GM10248 (cell line): ENCODE measurements at regions of chr11 and their contacts with region 1.

Region 1: GRCh38 chr11:131867457-131868257 is 497.2 kb downstream of the NTM start:
- DNase-seq: peak; percentile 76
- CTCF ChIP-seq: peak; percentile 74

Region 2: DNA sequence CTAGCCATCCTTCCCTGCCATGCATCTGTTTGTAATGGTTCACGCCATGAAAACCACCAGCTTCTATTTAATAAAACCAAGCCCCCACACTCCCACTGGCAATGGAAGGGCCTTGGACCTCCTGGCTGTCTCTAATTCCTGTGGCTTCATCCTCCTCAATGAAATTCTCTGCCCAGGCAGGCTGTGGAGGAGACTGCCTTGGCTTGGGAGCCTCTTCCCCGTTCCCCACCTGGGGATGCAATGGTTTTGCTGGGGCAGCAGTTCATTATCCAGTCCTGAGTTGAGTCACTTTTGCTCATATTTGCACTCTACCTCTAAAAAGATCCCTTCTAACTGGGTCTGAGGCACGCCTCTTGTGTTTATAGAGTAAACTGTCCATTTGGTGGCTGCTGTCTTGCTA is 18.5 kb after region 1 on chr11:
- CTCF ChIA-PET with region 1: interaction called, 22 read pairs
- POLR2A ChIA-PET with region 1: no interaction called
- DNase-seq: no peak
- CTCF ChIP-seq: no peak

Region 3: GRCh38 chr11:131893103-131893890 is 25.6 kb after region 1 on chr11:
- CTCF ChIA-PET with region 1: interaction called, 22 read pairs
- POLR2A ChIA-PET with region 1: no interaction called
- DNase-seq: peak; percentile 70
- CTCF ChIP-seq: no peak

Region 4: DNA sequence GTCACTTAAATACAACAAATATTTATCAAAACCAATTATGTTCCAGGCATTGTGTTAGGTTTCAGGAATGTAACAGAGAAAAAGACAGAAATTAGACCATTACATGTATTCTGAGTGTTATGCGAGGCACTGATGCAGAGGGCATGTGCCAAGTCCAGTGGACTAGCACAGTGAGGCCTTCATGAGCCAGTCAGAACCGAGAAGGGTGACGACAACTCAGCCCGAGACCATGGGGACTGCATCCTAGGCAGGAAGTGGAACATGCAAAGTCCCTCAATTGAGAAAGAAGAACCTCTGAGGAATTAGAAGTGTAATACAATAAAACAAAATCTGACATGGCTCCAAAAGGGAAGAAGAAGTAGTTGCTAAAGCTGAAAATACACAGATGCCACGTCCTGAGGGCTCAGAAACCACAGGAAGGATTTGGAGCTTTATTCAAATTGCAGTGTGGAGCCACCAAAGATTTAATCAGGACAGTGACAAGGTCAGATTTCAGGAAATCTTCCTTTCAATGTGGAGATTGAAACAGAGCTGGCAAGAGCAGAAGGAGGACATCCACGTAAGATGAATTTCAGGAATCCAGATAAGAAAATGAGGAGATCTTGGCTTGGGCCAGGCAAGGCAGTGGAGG is 32.4 kb after region 1 on chr11:
- CTCF ChIA-PET with region 1: interaction called, 22 read pairs
- POLR2A ChIA-PET with region 1: no interaction called
- DNase-seq: no peak
- CTCF ChIP-seq: no peak

Region 5: GRCh38 chr11:131910523-131911387 is 43.1 kb after region 1 on chr11:
- CTCF ChIA-PET with region 1: interaction called, 103 read pairs
- POLR2A ChIA-PET with region 1: no interaction called
- DNase-seq: peak; percentile 29
- CTCF ChIP-seq: no peak

Region 6: GRCh38 chr11:132126973-132127899 is 259.6 kb after region 1 on chr11:
- CTCF ChIA-PET with region 1: interaction called, 47 read pairs
- POLR2A ChIA-PET with region 1: no interaction called
- DNase-seq: peak; percentile 41
- CTCF ChIP-seq: peak; percentile 4

Region 7: GRCh38 chr11:132941024-132941646 is 1073.5 kb after region 1 on chr11:
- CTCF ChIA-PET with region 1: interaction called, 10 read pairs
- POLR2A ChIA-PET with region 1: no interaction called
- DNase-seq: no peak
- CTCF ChIP-seq: peak; percentile 73